ENCODE measurements at regions of chr17 and their contacts with region 1.

Region 1: GRCh38 chr17:32794533-32795246 is 82.2 kb downstream of the MYO1D start:
- DNase-seq: no peak
- ATAC-seq: no peak
- H3K4me3 ChIP-seq: no peak overlapping the region
- H3K27ac ChIP-seq: no peak overlapping the region
- H3K4me1 ChIP-seq: peaks cover 0 to 18% (median 0%) of the 10 kb centered on the region in 9 donors
- H3K27me3 ChIP-seq: no peaks in the 10 kb centered on the region
- CTCF ChIP-seq: no peak

Region 2: GRCh38 chr17:32757963-32758362 is 36.7 kb before region 1 on chr17:
- intact Hi-C with region 1: no loop called
- DNase-seq: no peak
- ATAC-seq: no peak
- H3K4me3 ChIP-seq: no peak overlapping the region
- H3K27ac ChIP-seq: no peak overlapping the region
- H3K4me1 ChIP-seq: peaks cover 0 to 5% (median 0%) of the 10 kb centered on the region in 9 donors
- H3K27me3 ChIP-seq: no peaks in the 10 kb centered on the region
- CTCF ChIP-seq: no peak

Region 3: GRCh38 chr17:32882734-32883133 is 88.0 kb after region 1 on chr17:
- intact Hi-C with region 1: loop called in 1 of 10 experiments (anchors 5 kb)
- DNase-seq: no peak
- ATAC-seq: no peak
- H3K4me3 ChIP-seq: no peak overlapping the region
- H3K27ac ChIP-seq: no peak overlapping the region
- H3K4me1 ChIP-seq: peaks cover 0 to 6% (median 3%) of the 10 kb centered on the region in 9 donors
- H3K27me3 ChIP-seq: peaks cover 0 to 26% (median 7%) of the 10 kb centered on the region in 7 donors
- CTCF ChIP-seq: no peak

Region 4: GRCh38 chr17:32992321-32993033 is 197.8 kb after region 1 on chr17:
- intact Hi-C with region 1: loop called in 3 of 10 experiments (anchors 5 to 10 kb)
- DNase-seq: no peak
- ATAC-seq: no peak
- H3K4me3 ChIP-seq: no peak overlapping the region
- H3K27ac ChIP-seq: no peak overlapping the region
- H3K4me1 ChIP-seq: no peaks in the 10 kb centered on the region
- H3K27me3 ChIP-seq: peaks cover 0 to 33% (median 1%) of the 10 kb centered on the region in 7 donors
- CTCF ChIP-seq: no peak

Measured in heart right ventricle (tissue), 16 donors.